ENCODE measurements at regions of chr3 and their contacts with region 1.

Region 1: DNA sequence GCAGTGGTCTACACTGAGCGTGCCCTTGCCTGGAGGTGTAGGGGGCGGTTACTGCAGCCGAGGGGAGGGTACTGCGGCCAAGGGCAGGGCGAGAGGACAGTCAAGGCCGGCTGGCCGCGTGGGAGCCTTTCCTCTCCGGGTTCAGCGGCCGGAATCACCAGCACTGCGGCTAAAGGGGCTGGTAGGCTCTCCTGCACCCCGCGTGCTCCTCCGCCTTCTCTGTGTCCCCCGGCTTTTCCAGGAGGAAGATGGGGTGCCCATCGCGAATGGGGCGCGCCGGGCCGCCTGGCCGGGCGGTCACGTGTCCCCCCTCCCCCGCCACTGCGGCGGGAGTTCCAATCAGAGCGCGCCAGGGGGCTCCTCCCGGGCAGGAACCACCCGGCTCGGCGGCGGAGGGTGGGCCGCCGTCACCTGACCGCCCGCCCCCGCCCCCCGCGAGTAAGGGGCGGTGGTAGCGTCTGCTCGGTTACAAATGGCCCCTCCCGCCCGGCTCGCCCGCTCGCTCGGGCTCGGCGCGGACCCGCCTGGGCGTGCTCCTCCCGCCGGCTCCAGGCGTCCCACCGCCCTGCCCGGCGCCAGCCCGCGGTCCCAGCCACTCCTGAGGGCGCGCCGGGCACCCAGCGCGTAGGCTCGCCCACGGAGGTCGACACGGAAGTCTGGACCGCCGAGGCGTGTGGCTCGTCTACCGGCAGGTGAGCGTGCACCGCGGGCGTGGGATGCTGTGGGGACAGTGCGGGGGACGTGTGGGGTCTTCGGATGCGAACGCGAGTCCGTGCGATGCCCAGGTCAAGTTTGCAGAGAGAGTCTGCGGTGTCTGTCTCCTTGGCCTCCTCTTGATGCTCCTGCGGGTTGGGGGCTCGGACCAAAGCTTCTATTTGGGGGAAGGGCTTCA is 242.6 kb upstream of the TOPAZ1 start:
- DNase-seq: peak; percentile 69
- H3K4me3 Mint-ChIP-seq: peak overlapping the region; percentile 75
- H3K27ac Mint-ChIP-seq: no peak overlapping the region
- H3K4me1 Mint-ChIP-seq: peaks cover 29% of the 10 kb centered on the region
- H3K27me3 Mint-ChIP-seq: peaks cover 32% of the 10 kb centered on the region
- CTCF ChIP-seq: no peak

Region 2: GRCh38 chr3:43699864-43700263 is 299.2 kb before region 1 on chr3:
- CTCF ChIA-PET with region 1: no interaction called
- POLR2A ChIA-PET with region 1: no interaction called
- intact Hi-C with region 1: loop called (anchors 10 kb)
- DNase-seq: peak; percentile 52
- H3K4me3 Mint-ChIP-seq: no peak overlapping the region
- H3K27ac Mint-ChIP-seq: no peak overlapping the region
- H3K4me1 Mint-ChIP-seq: peaks cover 46% of the 10 kb centered on the region
- H3K27me3 Mint-ChIP-seq: no peaks in the 10 kb centered on the region
- CTCF ChIP-seq: peak; percentile 38

Region 3: DNA sequence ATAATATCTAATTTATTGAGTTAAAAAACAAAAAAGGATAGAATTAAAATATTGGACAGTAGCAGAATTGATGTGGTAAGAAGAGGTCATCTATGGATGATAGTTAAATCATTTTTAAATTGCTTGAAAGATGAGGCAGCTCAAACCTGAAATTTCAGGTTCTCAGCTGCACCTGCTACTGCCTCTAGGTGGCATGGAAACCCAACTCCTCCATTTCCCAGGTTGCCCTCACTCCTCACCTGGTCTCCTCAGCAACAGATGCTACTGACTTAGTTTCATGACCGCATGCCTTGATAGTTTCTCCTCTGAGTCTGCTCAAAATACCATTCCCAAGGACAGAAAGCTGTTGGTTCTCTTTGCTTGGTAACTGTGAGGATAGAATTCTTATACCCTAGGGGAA is 160.2 kb before region 1 on chr3:
- CTCF ChIA-PET with region 1: no interaction called
- POLR2A ChIA-PET with region 1: no interaction called
- intact Hi-C with region 1: no loop called
- DNase-seq: no peak
- H3K4me3 Mint-ChIP-seq: no peak overlapping the region
- H3K27ac Mint-ChIP-seq: no peak overlapping the region
- H3K4me1 Mint-ChIP-seq: no peaks in the 10 kb centered on the region
- H3K27me3 Mint-ChIP-seq: no peaks in the 10 kb centered on the region
- CTCF ChIP-seq: no peak

Region 4: GRCh38 chr3:43855674-43856299 is 143.3 kb before region 1 on chr3:
- CTCF ChIA-PET with region 1: no interaction called
- POLR2A ChIA-PET with region 1: no interaction called
- intact Hi-C with region 1: loop called (anchors 5 kb)
- DNase-seq: peak; percentile 83
- H3K4me3 Mint-ChIP-seq: no peak overlapping the region
- H3K27ac Mint-ChIP-seq: no peak overlapping the region
- H3K4me1 Mint-ChIP-seq: peaks cover 22% of the 10 kb centered on the region
- H3K27me3 Mint-ChIP-seq: peaks cover 11% of the 10 kb centered on the region
- CTCF ChIP-seq: peak; percentile 43

Region 5: DNA sequence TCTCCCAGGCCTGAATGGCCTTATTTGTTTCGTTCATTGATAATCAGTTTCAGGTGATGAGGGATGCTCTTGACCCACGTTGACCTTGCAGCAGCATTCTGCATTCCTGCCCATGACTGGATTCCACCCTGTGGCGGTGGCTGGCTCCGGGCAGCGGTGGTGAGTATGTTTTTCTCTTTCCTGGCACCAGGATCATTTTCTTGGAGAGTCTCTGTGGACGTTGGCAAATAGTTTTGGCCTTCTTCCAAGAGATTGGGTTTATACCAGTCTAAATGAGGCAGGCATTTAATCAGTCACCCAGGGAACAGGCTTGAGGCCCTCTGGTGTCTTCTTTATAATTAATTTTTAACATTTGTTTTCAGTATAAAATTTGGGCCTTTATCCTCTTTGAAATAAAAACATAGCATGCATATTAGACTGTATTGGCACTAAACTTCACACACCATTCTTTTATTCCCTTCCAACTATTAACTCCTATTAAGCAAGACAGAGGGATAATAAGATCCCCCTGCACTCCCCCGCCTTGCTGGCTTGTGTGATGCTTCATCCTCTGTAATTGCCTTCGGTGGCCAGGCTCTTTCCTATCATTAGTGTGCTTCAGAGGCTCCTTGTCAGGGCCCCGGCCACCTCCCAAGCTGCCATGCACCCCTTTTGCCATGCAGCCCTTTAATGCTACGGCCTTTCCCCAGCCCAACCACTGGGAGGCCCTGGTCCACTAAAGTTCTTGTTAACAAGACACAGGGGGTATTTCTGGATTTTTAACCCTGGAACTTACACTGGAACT is 66.4 kb after region 1 on chr3:
- CTCF ChIA-PET with region 1: no interaction called
- POLR2A ChIA-PET with region 1: interaction called, 3 read pairs
- intact Hi-C with region 1: loop called (anchors 2 kb)
- DNase-seq: peak; percentile 96
- H3K4me3 Mint-ChIP-seq: no peak overlapping the region
- H3K27ac Mint-ChIP-seq: no peak overlapping the region
- H3K4me1 Mint-ChIP-seq: peaks cover 24% of the 10 kb centered on the region
- H3K27me3 Mint-ChIP-seq: no peaks in the 10 kb centered on the region
- CTCF ChIP-seq: no peak

Measured in MCF 10A (cell line).